Cardiac septum (tissue), 1 donor: ENCODE measurements at regions of chr21 and their contacts with region 1.

Region 1: GRCh38 chr21:37380349-37381323 is 14.1 kb downstream of the DYRK1A start:
- DNase-seq: no peak

Region 2: GRCh38 chr21:37415939-37416338 is 35.3 kb after region 1 on chr21:
- intact Hi-C with region 1: loop called (anchors 5 kb)
- DNase-seq: no peak

Region 3: GRCh38 chr21:37557261-37557950 is 176.8 kb after region 1 on chr21:
- intact Hi-C with region 1: no loop called
- DNase-seq: no peak

Region 4: DNA sequence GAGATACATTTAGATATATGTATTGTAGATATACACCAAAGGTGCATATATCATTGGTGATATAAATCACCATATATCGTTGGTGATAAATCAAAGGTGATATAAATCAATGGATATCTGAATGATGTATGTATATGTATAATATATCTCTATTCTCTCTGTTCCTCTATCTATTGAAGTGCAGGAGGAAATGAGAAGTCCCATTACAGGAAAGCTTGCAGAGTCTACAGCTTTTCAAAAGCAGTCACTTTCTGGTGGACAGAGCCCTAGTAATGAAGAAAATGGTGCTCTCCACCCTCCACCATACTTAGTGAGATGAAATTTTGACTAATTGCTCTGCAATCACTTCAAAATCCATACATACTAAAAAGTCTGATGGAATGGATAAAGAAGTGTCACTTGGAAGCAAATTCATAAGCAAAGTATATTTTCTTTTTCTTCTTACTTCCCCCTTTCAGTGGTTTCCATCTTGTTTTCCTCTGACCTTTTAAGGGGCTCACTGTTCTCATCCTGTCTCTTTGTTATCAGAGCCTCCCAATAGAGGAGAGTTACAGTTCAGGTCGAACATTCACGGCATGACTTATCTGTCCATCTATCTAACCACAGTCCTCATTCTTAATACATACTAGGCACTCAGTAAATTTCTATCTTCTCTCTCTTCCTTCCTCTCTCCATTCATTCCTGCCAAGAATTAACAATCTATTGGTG is 308.5 kb after region 1 on chr21:
- intact Hi-C with region 1: no loop called
- DNase-seq: no peak